Activated CD4-positive, alpha-beta T cell treated with anti-CD3 and anti-CD28 coated beads, Interleukin-2, amount 10 ng/mL, durations not matched to agents 24 days and 14 days (primary cell): ENCODE measurements at regions of chr6 and their contacts with region 1.

Region 1: DNA sequence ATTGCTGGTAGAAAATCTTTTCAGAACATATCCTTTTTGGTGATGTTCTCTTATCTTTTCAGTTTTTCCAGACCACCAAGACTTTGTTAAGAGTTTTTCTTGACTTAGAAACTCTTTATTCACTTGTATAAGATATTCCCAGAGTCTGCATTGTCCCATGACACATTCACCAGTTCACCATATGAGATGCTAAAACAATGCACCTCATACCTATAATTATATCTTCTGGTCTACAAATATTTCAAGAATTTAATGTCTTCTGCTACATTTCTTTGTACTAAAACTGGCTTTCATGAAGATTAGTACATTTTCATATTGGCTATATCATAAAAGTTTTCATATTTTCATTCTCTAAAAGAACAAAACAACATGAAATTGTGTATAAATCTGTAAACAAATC is 111.3 kb downstream of the ADGRG6 start:
- DNase-seq: no peak
- H3K4me3 Mint-ChIP-seq: no peak overlapping the region
- H3K27ac Mint-ChIP-seq: no peak overlapping the region
- H3K4me1 Mint-ChIP-seq: peaks cover 6% of the 10 kb centered on the region
- H3K27me3 Mint-ChIP-seq: peaks cover 23% of the 10 kb centered on the region

Region 2: GRCh38 chr6:142301651-142302370 is 111.3 kb before region 1 on chr6 and contains the start of gene ADGRG6:
- intact Hi-C with region 1: no loop called
- DNase-seq: peak; percentile 74
- H3K4me3 Mint-ChIP-seq: peak within 1 kb of the TSS; percentile 81
- H3K27ac Mint-ChIP-seq: no peak within 1 kb of the TSS
- H3K4me1 Mint-ChIP-seq: peaks cover 6% of the 10 kb centered on the region
- H3K27me3 Mint-ChIP-seq: peaks cover 45% of the 10 kb centered on the region
- total RNA-seq, gene ADGRG6: not detected in 2 replicates

Region 3: DNA sequence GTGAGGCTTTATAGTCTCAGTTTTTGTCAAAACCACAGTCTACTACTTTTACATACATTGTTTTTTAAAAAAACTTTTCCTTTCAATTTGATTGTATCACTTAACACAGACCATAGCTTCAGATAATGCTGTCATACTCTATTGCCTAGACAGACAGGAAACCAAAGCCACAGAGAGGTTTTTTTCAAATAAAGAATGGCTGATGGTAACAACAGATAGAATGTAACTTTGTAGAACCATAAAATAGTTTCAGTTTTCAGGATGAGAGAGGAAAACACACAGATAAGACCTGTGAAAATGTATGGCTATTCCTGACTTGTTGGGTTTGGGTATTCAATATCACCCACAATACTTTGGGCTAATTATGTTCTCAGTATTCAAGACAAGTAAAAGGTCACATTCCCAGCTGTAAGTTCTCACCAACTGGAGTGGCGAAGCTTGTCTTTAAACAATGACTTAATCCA is 17.3 kb before region 1 on chr6:
- intact Hi-C with region 1: loop called (anchors 1 kb)
- DNase-seq: peak; percentile 77
- H3K4me3 Mint-ChIP-seq: peak overlapping the region; percentile 36
- H3K27ac Mint-ChIP-seq: peak overlapping the region; percentile 8
- H3K4me1 Mint-ChIP-seq: peaks cover 13% of the 10 kb centered on the region
- H3K27me3 Mint-ChIP-seq: peaks cover 48% of the 10 kb centered on the region

Region 4: GRCh38 chr6:143146186-143146851 is 733.2 kb after region 1 on chr6:
- intact Hi-C with region 1: no loop called
- DNase-seq: no peak
- H3K4me3 Mint-ChIP-seq: no peak overlapping the region
- H3K27ac Mint-ChIP-seq: no peak overlapping the region
- H3K4me1 Mint-ChIP-seq: peaks cover 5% of the 10 kb centered on the region
- H3K27me3 Mint-ChIP-seq: no peaks in the 10 kb centered on the region